H1 (cell line): ENCODE measurements at regions of chr17 and their contacts with region 1.

Region 1: DNA sequence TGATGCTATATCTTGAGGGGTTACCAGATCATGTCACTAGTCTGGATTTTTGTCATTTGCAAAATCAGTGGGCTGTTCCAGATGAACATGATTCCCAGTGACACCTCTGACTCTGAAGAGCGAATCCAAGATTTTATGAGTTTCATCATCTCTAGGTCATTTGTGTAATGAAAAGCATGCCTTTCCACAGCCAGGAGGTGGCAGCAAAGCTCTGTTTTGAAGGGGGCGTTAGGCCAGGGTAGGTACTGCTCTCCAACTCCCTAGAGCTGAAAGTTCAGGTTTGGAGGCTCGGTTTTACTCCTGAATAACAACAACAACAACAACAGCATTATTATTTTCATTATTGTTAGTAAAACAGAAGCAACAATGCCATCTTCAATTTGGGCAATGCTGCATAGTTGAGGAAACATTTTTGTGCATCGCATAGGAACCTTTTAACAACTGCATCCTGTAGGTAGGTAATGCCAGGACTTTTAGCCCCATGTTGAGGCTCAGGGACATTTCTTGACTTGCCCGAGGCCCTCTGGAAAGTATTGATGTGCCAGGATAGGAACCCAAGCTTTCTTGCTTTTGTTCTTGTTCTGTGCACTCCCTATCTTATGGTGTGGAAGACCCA is 77.0 kb downstream of the MYH13 start:
- DNase-seq: peak; percentile 44 to 81
- H3K4me3 ChIP-seq: no peak overlapping the region
- H3K27ac ChIP-seq: no peak overlapping the region
- H3K4me1 ChIP-seq: peaks cover 0 to 2% (median 1%) of the 10 kb centered on the region in 4 experiments; a peak in 2 of 7 replicates
- H3K27me3 ChIP-seq: no peaks in the 10 kb centered on the region
- CTCF ChIP-seq: peak; percentile 64 to 93 (median 92)
- EP300 ChIP-seq: no peak
- POLR2A ChIP-seq: no peak
- RAD21 ChIP-seq: peak; percentile 92 to 95

Region 2: GRCh38 chr17:10309003-10309834 is 13.4 kb after region 1 on chr17:
- CTCF ChIA-PET with region 1: interaction called, 23 read pairs
- POLR2A ChIA-PET with region 1: no interaction called
- DNase-seq: no peak
- H3K4me3 ChIP-seq: no peak overlapping the region
- H3K27ac ChIP-seq: no peak overlapping the region
- H3K4me1 ChIP-seq: peaks cover 0 to 3% (median 3%) of the 10 kb centered on the region in 4 experiments; a peak in 4 of 7 replicates
- H3K27me3 ChIP-seq: no peaks in the 10 kb centered on the region; a peak in 1 of 7 replicates
- CTCF ChIP-seq: no peak
- EP300 ChIP-seq: no peak
- POLR2A ChIP-seq: no peak
- RAD21 ChIP-seq: no peak

Region 3: GRCh38 chr17:10316801-10317542 is 21.1 kb after region 1 on chr17:
- CTCF ChIA-PET with region 1: interaction called, 17 read pairs
- POLR2A ChIA-PET with region 1: no interaction called
- DNase-seq: peak in 1 of 2 experiments; percentile 73
- H3K4me3 ChIP-seq: no peak overlapping the region
- H3K27ac ChIP-seq: no peak overlapping the region
- H3K4me1 ChIP-seq: no peaks in the 10 kb centered on the region; a peak in 1 of 7 replicates
- H3K27me3 ChIP-seq: no peaks in the 10 kb centered on the region
- CTCF ChIP-seq: peak; percentile 51 to 78 (median 74)
- EP300 ChIP-seq: no peak
- POLR2A ChIP-seq: no peak
- RAD21 ChIP-seq: peak; percentile 39 to 43